HepG2 (cell line): ENCODE measurements at regions of chr9 and their contacts with region 1.

Region 1: GRCh38 chr9:14441976-14442651 is 128.2 kb upstream of the NFIB start:
- DNase-seq: peak; percentile 69
- ATAC-seq: peak; percentile 99
- H3K4me3 ChIP-seq: no peak overlapping the region
- H3K27ac ChIP-seq: no peak overlapping the region
- H3K4me1 ChIP-seq: no peaks in the 10 kb centered on the region
- H3K27me3 ChIP-seq: peaks cover 0 to 18% of the 10 kb centered on the region in 2 experiments; a peak in 1 of 5 replicates
- CTCF ChIP-seq: peak; percentile 55
- EP300 ChIP-seq: no peak
- POLR2A ChIP-seq: no peak
- RAD21 ChIP-seq: no peak

Region 2: GRCh38 chr9:14542071-14542470 is 100.0 kb after region 1 on chr9:
- CTCF ChIA-PET with region 1: no interaction called
- POLR2A ChIA-PET with region 1: no interaction called
- in situ Hi-C with region 1: no loop called
- intact Hi-C with region 1: no loop called
- DNase-seq: no peak
- ATAC-seq: no peak
- H3K4me3 ChIP-seq: no peak overlapping the region
- H3K27ac ChIP-seq: no peak overlapping the region
- H3K4me1 ChIP-seq: no peaks in the 10 kb centered on the region
- H3K27me3 ChIP-seq: no peaks in the 10 kb centered on the region; a peak in 2 of 5 replicates
- CTCF ChIP-seq: no peak
- EP300 ChIP-seq: no peak
- POLR2A ChIP-seq: no peak
- RAD21 ChIP-seq: no peak

Region 3: DNA sequence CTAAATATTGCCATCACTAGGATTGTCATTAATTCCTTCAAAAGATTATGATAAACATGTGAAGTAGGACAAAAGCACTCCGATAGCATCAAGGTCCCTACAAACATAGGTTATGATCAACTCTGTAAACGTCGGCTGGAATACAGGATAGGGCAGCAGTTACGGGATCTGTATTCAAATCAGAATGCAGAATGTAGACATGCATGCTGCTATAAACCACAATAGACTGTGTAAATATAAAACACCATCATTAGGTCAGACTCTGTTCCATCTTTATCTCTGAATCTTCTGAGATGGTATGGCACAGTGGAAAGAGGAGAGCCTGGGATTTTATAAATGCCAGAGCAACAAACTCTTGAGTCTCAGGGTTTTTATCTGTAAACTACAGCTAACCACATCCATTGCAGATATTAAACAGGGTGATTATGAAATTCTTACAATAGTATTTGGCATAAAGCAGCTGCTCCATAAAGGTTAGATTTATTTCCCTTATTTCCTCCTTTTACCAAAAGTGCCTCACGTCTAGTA is 142.4 kb after region 1 on chr9:
- CTCF ChIA-PET with region 1: no interaction called
- POLR2A ChIA-PET with region 1: no interaction called
- in situ Hi-C with region 1: no loop called
- intact Hi-C with region 1: no loop called
- DNase-seq: no peak
- ATAC-seq: no peak
- H3K4me3 ChIP-seq: no peak overlapping the region
- H3K27ac ChIP-seq: no peak overlapping the region
- H3K4me1 ChIP-seq: no peaks in the 10 kb centered on the region
- H3K27me3 ChIP-seq: no peaks in the 10 kb centered on the region
- CTCF ChIP-seq: no peak
- EP300 ChIP-seq: no peak
- POLR2A ChIP-seq: no peak
- RAD21 ChIP-seq: no peak

Region 4: DNA sequence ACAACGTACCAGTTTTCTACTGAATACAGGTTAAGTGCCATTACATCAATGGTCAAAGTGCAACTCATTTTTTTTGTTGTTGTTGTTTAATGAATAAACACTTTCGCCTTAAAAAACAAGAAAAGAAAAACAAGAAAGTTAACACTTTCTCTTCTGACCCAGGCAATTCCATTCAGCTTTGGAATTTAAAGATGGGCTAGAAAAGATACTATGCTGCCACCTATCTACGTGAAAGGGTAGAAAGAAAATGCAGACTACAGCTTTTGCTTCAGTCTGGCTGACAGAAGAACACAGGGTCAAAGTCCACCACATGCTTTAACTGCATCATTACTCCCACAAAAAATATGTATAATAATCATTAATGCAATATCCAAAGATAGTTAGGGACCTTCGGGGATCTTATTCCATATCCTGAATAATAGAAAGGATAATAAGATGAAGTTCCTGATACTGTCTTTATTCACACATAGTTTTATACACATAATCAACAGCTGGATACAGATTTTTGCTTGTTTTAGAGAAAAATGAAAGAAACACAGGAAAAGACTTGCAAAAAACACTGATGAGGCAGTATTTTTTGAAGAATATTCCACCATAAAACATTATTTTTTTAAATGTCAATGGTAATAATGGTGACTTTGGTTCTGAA is 210.7 kb after region 1 on chr9:
- CTCF ChIA-PET with region 1: no interaction called
- POLR2A ChIA-PET with region 1: no interaction called
- in situ Hi-C with region 1: no loop called
- intact Hi-C with region 1: loop called (anchors 2 kb)
- DNase-seq: peak; percentile 70
- ATAC-seq: peak; percentile 86
- H3K4me3 ChIP-seq: no peak overlapping the region
- H3K27ac ChIP-seq: no peak overlapping the region
- H3K4me1 ChIP-seq: no peaks in the 10 kb centered on the region
- H3K27me3 ChIP-seq: no peaks in the 10 kb centered on the region
- CTCF ChIP-seq: peak; percentile 76
- EP300 ChIP-seq: no peak
- POLR2A ChIP-seq: no peak
- RAD21 ChIP-seq: 0 out of 2 replicates have a peak, but pooled peaks have one; percentile 18

Region 5: GRCh38 chr9:14661421-14662059 is 219.4 kb after region 1 on chr9:
- CTCF ChIA-PET with region 1: interaction called, 5 read pairs
- POLR2A ChIA-PET with region 1: no interaction called
- in situ Hi-C with region 1: no loop called
- intact Hi-C with region 1: loop called (anchors 1 kb)
- DNase-seq: peak; percentile 27
- ATAC-seq: peak; percentile 47; the same call in 2 of the 3 replicates
- H3K4me3 ChIP-seq: no peak overlapping the region
- H3K27ac ChIP-seq: no peak overlapping the region
- H3K4me1 ChIP-seq: no peaks in the 10 kb centered on the region
- H3K27me3 ChIP-seq: no peaks in the 10 kb centered on the region
- CTCF ChIP-seq: peak; percentile 51
- EP300 ChIP-seq: no peak
- POLR2A ChIP-seq: no peak
- RAD21 ChIP-seq: no peak